CD8-positive, alpha-beta T cell (primary cell): ENCODE measurements at regions of chr5 and their contacts with region 1.

Region 1: DNA sequence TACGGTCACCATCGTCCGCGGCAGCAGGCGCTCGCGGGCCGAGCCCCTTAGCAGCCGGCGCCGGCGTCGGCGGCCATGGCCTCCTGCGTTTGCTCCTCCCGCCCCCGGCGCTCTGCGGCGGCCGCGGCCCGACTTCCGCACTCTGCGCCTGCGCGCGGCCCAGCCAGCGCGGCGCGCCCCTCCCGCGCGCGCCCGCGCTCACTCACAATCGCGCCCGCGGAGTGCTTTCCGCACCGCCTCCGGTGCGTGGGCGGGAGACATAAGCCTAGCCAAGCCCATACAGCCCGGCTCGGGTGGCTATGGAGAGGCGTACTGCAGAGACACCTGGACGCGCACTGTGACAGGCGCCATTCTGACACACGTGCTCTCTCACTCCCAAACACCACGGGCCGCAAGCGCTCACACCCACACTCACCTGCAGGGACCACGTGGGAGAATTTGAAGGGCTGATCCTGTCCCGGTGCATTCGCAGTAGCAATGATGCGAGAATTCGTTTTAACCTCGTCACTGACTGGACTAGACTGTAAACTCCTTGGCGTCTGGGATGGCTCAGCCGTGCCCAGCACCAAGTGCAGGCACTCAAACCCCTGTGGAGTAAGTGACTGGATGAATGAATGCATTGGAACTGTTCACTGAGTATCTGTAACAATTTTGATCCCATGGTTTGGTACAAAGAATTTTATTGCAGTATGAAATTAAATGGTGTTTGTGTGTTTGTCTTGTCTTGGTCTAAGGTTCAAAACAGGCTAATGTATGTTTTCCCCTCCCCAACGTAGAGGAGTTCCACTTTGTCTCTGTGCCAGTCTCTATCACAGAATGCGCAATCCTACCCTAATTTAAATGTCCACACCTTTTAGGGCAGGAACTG is at the start of gene RNF145:
- DNase-seq: peak; percentile 86 to 97 (median 93)
- ATAC-seq: peak; percentile 75
- H3K4me3 ChIP-seq: peak within 1 kb of the TSS; percentile 87 to 92
- H3K4me3 Mint-ChIP-seq: peak within 1 kb of the TSS; percentile 95
- H3K27ac ChIP-seq: peak within 1 kb of the TSS; percentile 83 to 85
- H3K27ac Mint-ChIP-seq: peak within 1 kb of the TSS; percentile 98
- H3K4me1 ChIP-seq: peaks cover 33% of the 10 kb centered on the region
- H3K4me1 Mint-ChIP-seq: peaks cover 45% of the 10 kb centered on the region
- H3K27me3 ChIP-seq: no peaks in the 10 kb centered on the region
- H3K27me3 Mint-ChIP-seq: no peaks in the 10 kb centered on the region
- CTCF ChIP-seq: no peak
- total RNA-seq, gene RNF145: 62.0 to 72.8 TPM

Region 2: DNA sequence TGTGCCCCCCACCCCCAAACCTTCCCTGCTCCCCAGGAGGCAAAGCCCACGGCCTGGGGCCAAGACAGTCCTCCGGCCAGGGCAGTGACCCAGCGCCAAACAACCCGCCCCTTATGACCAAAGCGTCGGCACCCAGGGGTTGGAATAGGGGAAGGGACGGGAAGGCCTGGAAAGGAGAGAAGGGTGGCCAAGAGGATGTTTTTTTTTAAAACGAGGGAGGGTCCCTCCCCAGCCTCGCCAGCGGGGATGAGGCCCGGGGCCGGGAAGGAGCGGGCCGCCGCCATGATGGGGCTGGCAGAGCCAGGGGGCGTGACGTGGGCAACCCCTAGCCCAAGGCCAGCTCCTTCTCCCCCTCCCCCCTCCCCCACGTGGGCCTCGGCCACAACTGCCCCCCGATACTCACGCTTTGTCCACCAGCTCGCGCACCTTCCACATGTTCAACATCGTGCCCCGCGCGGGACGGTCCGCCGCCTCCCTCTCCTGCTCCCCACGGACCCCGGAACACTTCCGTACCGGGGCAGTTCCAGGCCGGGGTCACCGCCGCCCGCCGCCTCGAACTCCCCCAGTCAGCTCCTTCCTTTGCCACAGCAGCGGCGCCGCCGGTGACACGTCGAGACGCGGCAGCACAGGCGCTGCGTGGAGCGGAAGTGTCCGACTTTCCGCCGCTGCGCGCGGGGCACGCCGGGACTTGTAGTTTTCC is 1351.0 kb before region 1 on chr5 and contains the start of gene CLINT1:
- CTCF ChIA-PET with region 1: no interaction called
- POLR2A ChIA-PET with region 1: no interaction called
- intact Hi-C with region 1: loop called in 1 of 2 experiments (anchors 10 kb)
- DNase-seq: peak; percentile 66 to 93 (median 87)
- ATAC-seq: peak; percentile 94
- H3K4me3 ChIP-seq: peak within 1 kb of the TSS; percentile 78 to 86
- H3K4me3 Mint-ChIP-seq: peak within 1 kb of the TSS; percentile 89
- H3K27ac ChIP-seq: peak within 1 kb of the TSS; percentile 74 to 90
- H3K27ac Mint-ChIP-seq: peak within 1 kb of the TSS; percentile 95
- H3K4me1 ChIP-seq: peaks cover 41% of the 10 kb centered on the region
- H3K4me1 Mint-ChIP-seq: peaks cover 65% of the 10 kb centered on the region
- H3K27me3 ChIP-seq: no peaks in the 10 kb centered on the region
- H3K27me3 Mint-ChIP-seq: no peaks in the 10 kb centered on the region
- CTCF ChIP-seq: no peak
- total RNA-seq, gene CLINT1: 94.7 to 101 TPM

Region 3: GRCh38 chr5:159166416-159166815 is 43.3 kb before region 1 on chr5:
- CTCF ChIA-PET with region 1: no interaction called
- POLR2A ChIA-PET with region 1: interaction called, 4 read pairs
- intact Hi-C with region 1: loop called in 1 of 2 experiments (anchors 2 kb)
- DNase-seq: no peak
- ATAC-seq: no peak
- H3K4me3 ChIP-seq: no peak overlapping the region
- H3K4me3 Mint-ChIP-seq: no peak overlapping the region
- H3K27ac ChIP-seq: no peak overlapping the region
- H3K27ac Mint-ChIP-seq: no peak overlapping the region
- H3K4me1 ChIP-seq: no peaks in the 10 kb centered on the region
- H3K4me1 Mint-ChIP-seq: peaks cover 19% of the 10 kb centered on the region
- H3K27me3 ChIP-seq: no peaks in the 10 kb centered on the region
- H3K27me3 Mint-ChIP-seq: no peaks in the 10 kb centered on the region
- CTCF ChIP-seq: no peak

Region 4: DNA sequence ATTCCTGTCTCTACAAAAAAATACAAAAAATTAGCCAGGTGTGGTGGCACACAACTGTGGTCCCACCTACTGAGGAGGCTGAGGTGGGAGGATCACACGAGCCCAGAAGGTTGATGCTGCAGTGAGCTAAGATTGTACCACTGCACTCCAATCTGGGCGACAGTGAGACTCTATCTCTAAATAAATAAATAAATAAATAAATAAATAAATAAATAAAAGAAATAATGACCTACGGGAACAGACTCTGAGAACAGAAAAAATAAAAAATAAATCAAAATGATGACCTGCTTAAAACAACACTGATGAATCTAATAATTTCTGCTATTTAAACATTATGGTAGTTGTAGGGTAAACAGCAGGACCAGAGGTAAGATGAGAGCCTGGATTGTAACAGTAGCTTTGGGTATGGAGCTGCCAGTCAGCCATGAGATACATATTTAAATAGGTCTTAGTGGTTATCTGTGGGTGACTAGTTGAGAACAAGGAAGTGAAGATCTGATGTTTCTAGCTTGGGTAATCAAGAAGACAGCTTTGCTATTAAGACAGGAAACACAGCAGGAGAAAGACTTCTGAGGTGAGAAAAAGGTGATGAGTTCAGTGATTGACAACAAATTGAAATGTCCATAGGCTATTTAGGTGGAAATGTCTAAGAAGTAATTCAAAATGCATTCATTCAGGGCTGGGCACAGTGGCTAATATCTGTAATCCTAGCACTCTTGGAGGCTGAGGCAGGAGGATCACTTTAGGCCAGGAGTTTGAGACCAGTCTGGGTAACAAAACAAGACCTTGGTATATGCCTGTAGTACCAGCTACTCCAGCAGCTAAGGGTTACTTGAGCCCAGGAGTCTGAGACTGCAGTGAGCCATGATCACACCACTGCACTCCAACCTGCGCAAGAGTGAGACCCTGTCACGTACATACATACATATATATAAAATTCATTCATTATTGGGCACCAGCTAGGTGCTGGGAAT is 11.3 kb before region 1 on chr5:
- CTCF ChIA-PET with region 1: interaction called, 5 read pairs
- POLR2A ChIA-PET with region 1: interaction called, 23 read pairs
- intact Hi-C with region 1: loop called in 1 of 2 experiments (anchors 1 kb)
- DNase-seq: peak in 2 of 9 experiments; percentile 38 to 68
- ATAC-seq: peak; percentile 85
- H3K4me3 ChIP-seq: no peak overlapping the region
- H3K4me3 Mint-ChIP-seq: peak overlapping the region; percentile 30
- H3K27ac ChIP-seq: peak overlapping the region in 1 of 2 experiments; percentile 58
- H3K27ac Mint-ChIP-seq: peak overlapping the region; percentile 80
- H3K4me1 ChIP-seq: peaks cover 37% of the 10 kb centered on the region
- H3K4me1 Mint-ChIP-seq: peaks cover 79% of the 10 kb centered on the region
- H3K27me3 ChIP-seq: no peaks in the 10 kb centered on the region
- H3K27me3 Mint-ChIP-seq: no peaks in the 10 kb centered on the region
- CTCF ChIP-seq: no peak

Region 5: GRCh38 chr5:159230657-159231056 is 21.0 kb after region 1 on chr5:
- CTCF ChIA-PET with region 1: no interaction called
- POLR2A ChIA-PET with region 1: no interaction called
- intact Hi-C with region 1: no loop called
- DNase-seq: no peak
- ATAC-seq: no peak
- H3K4me3 ChIP-seq: no peak overlapping the region
- H3K4me3 Mint-ChIP-seq: no peak overlapping the region
- H3K27ac ChIP-seq: no peak overlapping the region
- H3K27ac Mint-ChIP-seq: no peak overlapping the region
- H3K4me1 ChIP-seq: no peaks in the 10 kb centered on the region
- H3K4me1 Mint-ChIP-seq: no peaks in the 10 kb centered on the region
- H3K27me3 ChIP-seq: no peaks in the 10 kb centered on the region
- H3K27me3 Mint-ChIP-seq: no peaks in the 10 kb centered on the region
- CTCF ChIP-seq: no peak

Region 6: DNA sequence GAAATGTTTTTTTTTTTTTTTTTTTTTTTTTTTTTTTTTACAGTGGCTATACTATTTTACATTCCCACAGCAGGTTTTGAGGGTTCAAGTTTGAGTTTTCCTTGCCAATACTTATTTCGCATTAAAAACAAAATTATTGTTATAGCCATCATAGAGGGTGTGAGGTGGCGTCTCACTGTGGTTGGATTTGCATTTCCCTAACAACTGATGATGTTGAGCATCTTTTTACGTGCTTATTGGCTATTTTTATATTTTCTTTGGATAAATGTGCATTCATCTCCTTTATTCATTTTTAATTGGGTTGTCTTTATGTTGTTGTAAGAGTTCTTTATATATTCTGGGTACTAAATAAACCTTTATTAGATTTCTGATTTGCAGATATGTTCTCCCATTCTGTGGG is 34.5 kb after region 1 on chr5:
- CTCF ChIA-PET with region 1: no interaction called
- POLR2A ChIA-PET with region 1: no interaction called
- intact Hi-C with region 1: no loop called
- DNase-seq: no peak
- ATAC-seq: no peak
- H3K4me3 ChIP-seq: no peak overlapping the region
- H3K4me3 Mint-ChIP-seq: no peak overlapping the region
- H3K27ac ChIP-seq: no peak overlapping the region
- H3K27ac Mint-ChIP-seq: no peak overlapping the region
- H3K4me1 ChIP-seq: peaks cover 10% of the 10 kb centered on the region
- H3K4me1 Mint-ChIP-seq: peaks cover 17% of the 10 kb centered on the region
- H3K27me3 ChIP-seq: peaks cover 0 to 3% of the 10 kb centered on the region in 2 experiments
- H3K27me3 Mint-ChIP-seq: peaks cover 12% of the 10 kb centered on the region
- CTCF ChIP-seq: no peak

Region 7: DNA sequence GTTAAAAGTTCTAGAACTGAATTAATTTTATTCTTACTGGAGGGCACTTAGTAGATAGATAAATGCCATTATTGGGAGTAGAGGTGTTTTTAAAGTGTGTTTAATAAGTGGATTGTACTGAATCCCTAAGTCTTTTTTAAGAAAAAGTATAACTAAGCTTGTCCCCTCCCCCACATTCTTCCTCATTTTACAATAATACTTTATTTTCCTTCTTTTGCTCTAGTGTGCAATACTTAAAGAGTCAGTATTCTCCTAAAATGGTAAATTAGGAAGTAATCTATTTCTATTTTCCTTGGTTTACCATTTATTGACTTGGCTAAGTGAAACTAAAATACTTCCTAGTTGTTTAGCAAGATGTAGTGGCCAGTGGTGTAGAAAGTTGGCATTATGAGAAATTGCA is 65.0 kb after region 1 on chr5:
- CTCF ChIA-PET with region 1: interaction called, 4 read pairs
- POLR2A ChIA-PET with region 1: interaction called, 10 read pairs
- intact Hi-C with region 1: no loop called
- DNase-seq: no peak
- ATAC-seq: no peak
- H3K4me3 ChIP-seq: no peak overlapping the region
- H3K4me3 Mint-ChIP-seq: no peak overlapping the region
- H3K27ac ChIP-seq: no peak overlapping the region
- H3K27ac Mint-ChIP-seq: no peak overlapping the region
- H3K4me1 ChIP-seq: no peaks in the 10 kb centered on the region
- H3K4me1 Mint-ChIP-seq: peaks cover 26% of the 10 kb centered on the region
- H3K27me3 ChIP-seq: no peaks in the 10 kb centered on the region
- H3K27me3 Mint-ChIP-seq: no peaks in the 10 kb centered on the region
- CTCF ChIP-seq: no peak

Region 8: GRCh38 chr5:160008877-160009590 is 799.4 kb after region 1 on chr5 and contains the start of gene TTC1:
- CTCF ChIA-PET with region 1: no interaction called
- POLR2A ChIA-PET with region 1: interaction called, 5 read pairs
- intact Hi-C with region 1: loop called (anchors 1 to 5 kb)
- DNase-seq: peak; percentile 82 to 99 (median 93)
- ATAC-seq: peak; percentile 96
- H3K4me3 ChIP-seq: peak within 1 kb of the TSS; percentile 84 to 92
- H3K4me3 Mint-ChIP-seq: peak within 1 kb of the TSS; percentile 99
- H3K27ac ChIP-seq: peak within 1 kb of the TSS; percentile 86 to 89
- H3K27ac Mint-ChIP-seq: peak within 1 kb of the TSS; percentile 99
- H3K4me1 ChIP-seq: peaks cover 25% of the 10 kb centered on the region
- H3K4me1 Mint-ChIP-seq: peaks cover 31% of the 10 kb centered on the region
- H3K27me3 ChIP-seq: peaks cover 0 to 2% of the 10 kb centered on the region in 2 experiments
- H3K27me3 Mint-ChIP-seq: no peaks in the 10 kb centered on the region
- CTCF ChIP-seq: no peak
- total RNA-seq, gene TTC1: 12.6 to 14.3 TPM

Region 9: GRCh38 chr5:160418561-160419457 is 1209.1 kb after region 1 on chr5 and contains the start of gene SLU7:
- CTCF ChIA-PET with region 1: no interaction called
- POLR2A ChIA-PET with region 1: no interaction called
- intact Hi-C with region 1: loop called in 1 of 2 experiments (anchors 5 kb)
- DNase-seq: peak; percentile 88 to 96 (median 92)
- ATAC-seq: peak; percentile 79
- H3K4me3 ChIP-seq: peak within 1 kb of the TSS; percentile 59 to 95
- H3K4me3 Mint-ChIP-seq: peak within 1 kb of the TSS; percentile 95
- H3K27ac ChIP-seq: peak within 1 kb of the TSS; percentile 81 to 93
- H3K27ac Mint-ChIP-seq: peak within 1 kb of the TSS; percentile 98
- H3K4me1 ChIP-seq: peaks cover 32% of the 10 kb centered on the region
- H3K4me1 Mint-ChIP-seq: peaks cover 76% of the 10 kb centered on the region
- H3K27me3 ChIP-seq: no peaks in the 10 kb centered on the region
- H3K27me3 Mint-ChIP-seq: no peaks in the 10 kb centered on the region
- CTCF ChIP-seq: no peak
- total RNA-seq, gene SLU7: 127 to 136 TPM